Activated T-helper 1 cell treated with anti-CD3 and anti-CD28 coated beads, Interleukin-12 subunit alpha, Interleukin-12 subunit beta, Interleukin-2, Interleukin-4 antibody, amounts not matched to agents 30 ng/mL and 10 ng/mL and 1 ng/mL, durations not matched to agents 14 hours and 24 hours and 36 hours (primary cell): ENCODE measurements at regions of chr6 and their contacts with region 1.

Region 1: GRCh38 chr6:134174672-134175198 is 122.3 kb upstream of the SLC2A12 start:
- DNase-seq: peak; percentile 89
- H3K4me3 Mint-ChIP-seq: peak overlapping the region; percentile 96
- H3K27ac Mint-ChIP-seq: peak overlapping the region; percentile 98
- H3K4me1 Mint-ChIP-seq: peaks cover 78% of the 10 kb centered on the region
- H3K27me3 Mint-ChIP-seq: no peaks in the 10 kb centered on the region

Region 2: GRCh38 chr6:133854364-133855275 is 320.1 kb before region 1 on chr6:
- intact Hi-C with region 1: no loop called
- DNase-seq: no peak
- H3K4me3 Mint-ChIP-seq: no peak overlapping the region
- H3K27ac Mint-ChIP-seq: no peak overlapping the region
- H3K4me1 Mint-ChIP-seq: peaks cover 4% of the 10 kb centered on the region
- H3K27me3 Mint-ChIP-seq: peaks cover 51% of the 10 kb centered on the region

Region 3: DNA sequence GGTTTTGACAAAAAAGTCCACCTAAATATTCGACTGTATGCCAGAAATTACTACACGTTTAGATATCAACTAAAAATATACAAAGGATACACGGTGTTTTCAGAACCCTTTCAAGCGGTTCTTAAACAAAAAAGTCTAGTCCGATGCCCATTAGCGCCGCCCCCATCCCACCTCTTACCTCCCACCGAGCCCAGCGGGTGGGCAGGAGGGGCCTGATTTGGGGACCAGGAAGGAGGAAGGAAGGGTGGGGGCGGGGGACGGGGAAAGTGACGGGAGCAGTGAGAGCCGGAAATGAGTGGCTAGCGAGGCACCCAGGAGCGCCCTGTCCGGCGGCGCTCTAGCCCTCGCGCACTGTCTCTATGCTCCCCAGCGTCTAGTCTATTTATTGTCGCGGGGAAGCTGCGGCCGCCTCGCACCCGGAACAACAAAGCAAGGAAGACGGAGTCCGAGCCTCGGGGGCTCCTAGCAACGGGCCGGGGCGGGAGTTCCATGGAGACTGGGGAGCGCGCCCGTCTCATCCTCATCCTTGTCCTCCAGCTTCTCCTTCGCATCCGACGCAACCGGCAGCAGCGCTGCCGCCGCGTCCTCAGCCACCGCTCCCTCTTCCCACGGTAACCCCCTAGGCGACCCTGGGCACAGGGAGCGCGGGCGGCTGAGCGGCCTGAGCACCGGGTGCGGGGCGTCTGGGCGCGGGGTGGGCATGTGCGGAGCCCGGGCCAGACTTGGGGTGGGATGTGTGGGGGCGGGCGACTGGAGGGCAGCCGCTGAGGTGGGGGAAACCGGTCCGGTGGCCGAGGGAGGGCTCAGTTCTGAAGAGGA is 221.7 kb before region 1 on chr6 and contains the start of gene TBPL1:
- intact Hi-C with region 1: loop called (anchors 1 kb)
- DNase-seq: peak; percentile 76
- H3K4me3 Mint-ChIP-seq: peak within 1 kb of the TSS; percentile 95
- H3K27ac Mint-ChIP-seq: peak within 1 kb of the TSS; percentile 90
- H3K4me1 Mint-ChIP-seq: peaks cover 48% of the 10 kb centered on the region
- H3K27me3 Mint-ChIP-seq: peaks cover 10% of the 10 kb centered on the region
- total RNA-seq, gene TBPL1: 40.5 and 42.2 TPM in 2 replicates

Region 4: DNA sequence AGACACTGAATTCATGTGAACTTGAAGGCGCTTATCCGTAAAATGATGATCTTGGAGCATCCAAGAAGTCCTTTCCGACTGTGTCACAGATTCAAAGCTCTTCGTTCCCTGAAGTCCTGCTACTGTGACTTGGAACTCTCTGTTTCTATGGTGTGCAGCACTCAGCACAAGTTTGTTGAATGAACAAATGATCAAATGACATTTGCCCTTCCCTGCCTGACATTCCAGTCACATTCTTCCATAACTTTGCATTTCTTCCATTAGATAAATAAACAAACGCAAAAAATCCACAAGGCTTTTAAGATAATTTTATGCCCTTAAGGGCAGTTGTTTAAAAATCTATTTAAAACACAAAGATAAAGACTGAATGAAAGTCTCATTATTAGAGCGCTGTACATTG is 103.3 kb after region 1 on chr6:
- intact Hi-C with region 1: loop called (anchors 2 kb)
- DNase-seq: no peak
- H3K4me3 Mint-ChIP-seq: no peak overlapping the region
- H3K27ac Mint-ChIP-seq: no peak overlapping the region
- H3K4me1 Mint-ChIP-seq: peaks cover 42% of the 10 kb centered on the region
- H3K27me3 Mint-ChIP-seq: peaks cover 2% of the 10 kb centered on the region

Region 5: GRCh38 chr6:134379086-134379485 is 204.4 kb after region 1 on chr6:
- intact Hi-C with region 1: loop called (anchors 1 kb)
- DNase-seq: peak; percentile 49
- H3K4me3 Mint-ChIP-seq: peak overlapping the region; percentile 38
- H3K27ac Mint-ChIP-seq: peak overlapping the region; percentile 82
- H3K4me1 Mint-ChIP-seq: peaks cover 47% of the 10 kb centered on the region
- H3K27me3 Mint-ChIP-seq: no peaks in the 10 kb centered on the region

Region 6: DNA sequence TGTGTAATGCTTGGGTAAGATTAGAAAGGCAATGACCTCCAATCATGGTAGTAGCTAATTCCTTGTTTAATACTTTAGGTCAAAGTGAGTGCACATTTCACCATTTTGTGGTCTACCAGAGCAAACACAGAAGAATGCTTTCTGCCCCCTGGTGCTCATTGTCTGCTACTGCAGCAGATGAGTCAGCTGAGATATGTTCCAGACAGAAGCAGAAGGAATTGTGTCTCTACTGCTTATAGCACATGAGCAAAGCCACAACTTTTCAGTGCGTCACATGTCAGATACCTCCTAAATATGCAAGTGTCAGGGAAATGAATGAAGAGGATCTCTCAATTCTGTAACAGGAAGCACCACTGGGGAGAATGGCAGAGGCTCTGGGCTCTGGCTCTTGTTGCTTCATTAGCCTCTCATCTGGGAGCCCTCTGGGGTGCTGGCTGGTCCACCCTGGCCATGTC is 466.3 kb after region 1 on chr6:
- intact Hi-C with region 1: loop called (anchors 1 kb)
- DNase-seq: peak; percentile 65
- H3K4me3 Mint-ChIP-seq: no peak overlapping the region
- H3K27ac Mint-ChIP-seq: no peak overlapping the region
- H3K4me1 Mint-ChIP-seq: peaks cover 33% of the 10 kb centered on the region
- H3K27me3 Mint-ChIP-seq: no peaks in the 10 kb centered on the region

Region 7: DNA sequence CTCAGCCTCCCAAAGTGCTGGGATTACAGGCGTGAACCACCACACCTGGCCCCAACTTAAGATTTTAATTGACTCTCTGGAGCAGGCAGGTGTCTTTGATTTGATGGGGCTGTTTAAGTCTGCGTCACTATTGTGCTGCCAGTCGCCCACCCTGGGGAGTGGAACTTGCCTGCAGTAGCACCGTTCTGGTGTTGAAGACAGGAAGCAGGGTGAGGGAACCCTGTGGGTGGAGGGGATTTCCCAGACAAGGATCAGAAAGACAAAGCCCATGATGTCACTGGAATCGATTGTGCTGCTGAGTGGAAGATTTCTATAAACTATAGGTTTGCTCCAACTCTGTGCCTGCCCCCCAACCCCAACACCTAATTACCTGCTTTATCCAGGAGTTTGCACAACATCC is 764.2 kb after region 1 on chr6:
- intact Hi-C with region 1: loop called (anchors 1 kb)
- DNase-seq: peak; percentile 41
- H3K4me3 Mint-ChIP-seq: no peak overlapping the region
- H3K27ac Mint-ChIP-seq: peak overlapping the region; percentile 5
- H3K4me1 Mint-ChIP-seq: peaks cover 39% of the 10 kb centered on the region
- H3K27me3 Mint-ChIP-seq: no peaks in the 10 kb centered on the region